ENCODE measurements at regions of chr17 and their contacts with region 1.

Region 1: DNA sequence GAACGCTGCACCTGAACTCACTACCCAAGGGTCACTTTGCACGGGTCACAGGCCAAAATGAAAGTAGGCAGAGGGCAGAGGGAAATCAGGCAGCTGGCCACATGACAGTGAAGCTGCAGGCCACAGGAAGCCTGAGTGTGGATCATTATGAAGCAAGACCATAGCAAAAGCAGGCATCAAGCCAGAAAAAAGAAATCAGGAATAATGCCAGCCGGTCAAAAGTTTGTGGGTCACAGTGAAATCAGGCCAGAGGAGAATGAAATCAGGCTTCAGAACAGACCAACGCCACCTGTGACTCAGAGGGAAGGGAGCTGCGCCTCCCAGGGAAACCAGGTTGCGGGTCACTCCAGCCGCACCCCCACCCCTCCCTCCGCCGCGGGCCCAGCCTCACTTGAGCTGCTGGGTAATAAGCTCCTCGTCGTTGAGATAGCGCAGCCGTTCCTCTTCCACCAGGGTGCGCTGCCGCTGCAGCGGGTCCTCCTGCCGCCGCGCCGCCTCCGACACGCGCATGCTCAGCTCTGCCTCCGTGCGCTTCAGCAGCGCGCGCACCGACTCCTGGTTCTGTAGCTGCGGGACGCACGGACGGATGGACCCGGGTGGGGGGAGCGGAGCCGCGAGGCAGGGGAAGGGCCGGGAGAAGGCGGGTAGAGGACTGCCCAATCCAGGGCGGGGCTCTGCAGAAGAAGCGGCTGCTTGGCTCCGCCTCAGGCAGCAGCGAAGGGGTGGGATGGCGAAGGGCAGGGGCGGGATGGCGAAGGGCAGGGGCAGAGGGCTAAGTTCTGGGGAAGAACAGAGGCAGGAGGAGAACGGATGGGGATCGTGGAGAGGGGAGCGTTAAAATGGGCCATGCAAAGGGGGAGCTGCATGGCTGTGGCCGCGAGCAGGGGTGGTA is 47.7 kb downstream of the SRCIN1 start:
- DNase-seq: peak; percentile 62
- H3K4me3 ChIP-seq: peak overlapping the region; percentile 52
- H3K27ac ChIP-seq: no peak overlapping the region
- H3K27me3 ChIP-seq: peaks cover 70% of the 10 kb centered on the region
- CTCF ChIP-seq: peak; percentile 93

Region 2: DNA sequence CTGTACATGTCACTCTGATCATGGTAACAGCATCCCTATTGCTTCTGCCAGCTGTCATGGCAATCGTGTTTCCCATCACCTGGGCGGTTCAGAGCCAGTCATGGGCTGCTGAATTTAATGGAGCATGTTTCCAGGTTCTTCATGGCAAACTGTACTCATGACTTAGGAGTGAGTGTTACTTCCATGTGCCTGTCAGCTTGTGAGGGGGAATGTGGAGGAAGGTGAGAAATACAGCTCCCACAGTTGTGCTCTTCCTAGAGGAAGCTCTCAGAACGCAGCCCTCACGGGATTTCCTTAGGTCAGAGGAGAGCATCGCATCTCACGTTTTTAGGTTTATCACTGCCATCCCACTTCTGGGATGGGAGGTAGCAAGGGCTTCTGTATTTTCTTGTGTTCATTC is 157.8 kb before region 1 on chr17:
- CTCF ChIA-PET with region 1: no interaction called
- POLR2A ChIA-PET with region 1: no interaction called
- DNase-seq: no peak
- H3K4me3 ChIP-seq: no peak overlapping the region
- H3K27ac ChIP-seq: no peak overlapping the region
- H3K27me3 ChIP-seq: no peaks in the 10 kb centered on the region
- CTCF ChIP-seq: no peak

Region 3: GRCh38 chr17:38533866-38534497 is 24.1 kb before region 1 on chr17:
- CTCF ChIA-PET with region 1: interaction called, 15 read pairs
- POLR2A ChIA-PET with region 1: no interaction called
- DNase-seq: no peak
- H3K4me3 ChIP-seq: no peak overlapping the region
- H3K27ac ChIP-seq: no peak overlapping the region
- H3K27me3 ChIP-seq: peaks cover 32% of the 10 kb centered on the region
- CTCF ChIP-seq: no peak

Region 4: DNA sequence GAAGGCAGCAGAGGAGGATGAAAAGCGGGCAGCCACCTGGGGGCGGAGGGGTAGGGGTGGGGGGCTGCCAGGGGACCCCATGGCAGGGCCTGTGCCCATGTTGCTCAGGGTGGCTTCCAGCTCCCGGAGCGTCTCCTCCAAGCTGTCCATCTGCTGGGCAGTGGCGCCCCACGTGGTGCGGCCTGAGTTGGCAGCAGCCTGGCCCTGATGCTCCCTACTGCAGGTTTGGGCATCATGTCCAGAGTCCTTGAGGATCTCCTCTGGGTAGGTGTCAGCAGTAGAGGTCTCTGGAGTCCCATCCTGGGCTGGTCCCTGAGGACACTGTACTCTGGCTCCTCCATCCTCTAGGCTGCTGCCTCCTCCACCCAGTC is 13.3 kb before region 1 on chr17:
- CTCF ChIA-PET with region 1: interaction called, 38 read pairs
- POLR2A ChIA-PET with region 1: no interaction called
- DNase-seq: no peak
- H3K4me3 ChIP-seq: no peak overlapping the region
- H3K27ac ChIP-seq: no peak overlapping the region
- H3K27me3 ChIP-seq: peaks cover 32% of the 10 kb centered on the region
- CTCF ChIP-seq: no peak

Region 5: GRCh38 chr17:38584350-38584925 is 26.4 kb after region 1 on chr17:
- CTCF ChIA-PET with region 1: interaction called, 49 read pairs
- POLR2A ChIA-PET with region 1: no interaction called
- DNase-seq: no peak
- H3K4me3 ChIP-seq: no peak overlapping the region
- H3K27ac ChIP-seq: no peak overlapping the region
- H3K27me3 ChIP-seq: peaks cover 67% of the 10 kb centered on the region
- CTCF ChIP-seq: peak; percentile 88

Region 6: GRCh38 chr17:38667099-38667786 is 109.2 kb after region 1 on chr17:
- CTCF ChIA-PET with region 1: interaction called, 77 read pairs
- POLR2A ChIA-PET with region 1: no interaction called
- DNase-seq: peak; percentile 42
- H3K4me3 ChIP-seq: no peak overlapping the region
- H3K27ac ChIP-seq: no peak overlapping the region
- H3K27me3 ChIP-seq: peaks cover 50% of the 10 kb centered on the region
- CTCF ChIP-seq: peak; percentile 100

Region 7: DNA sequence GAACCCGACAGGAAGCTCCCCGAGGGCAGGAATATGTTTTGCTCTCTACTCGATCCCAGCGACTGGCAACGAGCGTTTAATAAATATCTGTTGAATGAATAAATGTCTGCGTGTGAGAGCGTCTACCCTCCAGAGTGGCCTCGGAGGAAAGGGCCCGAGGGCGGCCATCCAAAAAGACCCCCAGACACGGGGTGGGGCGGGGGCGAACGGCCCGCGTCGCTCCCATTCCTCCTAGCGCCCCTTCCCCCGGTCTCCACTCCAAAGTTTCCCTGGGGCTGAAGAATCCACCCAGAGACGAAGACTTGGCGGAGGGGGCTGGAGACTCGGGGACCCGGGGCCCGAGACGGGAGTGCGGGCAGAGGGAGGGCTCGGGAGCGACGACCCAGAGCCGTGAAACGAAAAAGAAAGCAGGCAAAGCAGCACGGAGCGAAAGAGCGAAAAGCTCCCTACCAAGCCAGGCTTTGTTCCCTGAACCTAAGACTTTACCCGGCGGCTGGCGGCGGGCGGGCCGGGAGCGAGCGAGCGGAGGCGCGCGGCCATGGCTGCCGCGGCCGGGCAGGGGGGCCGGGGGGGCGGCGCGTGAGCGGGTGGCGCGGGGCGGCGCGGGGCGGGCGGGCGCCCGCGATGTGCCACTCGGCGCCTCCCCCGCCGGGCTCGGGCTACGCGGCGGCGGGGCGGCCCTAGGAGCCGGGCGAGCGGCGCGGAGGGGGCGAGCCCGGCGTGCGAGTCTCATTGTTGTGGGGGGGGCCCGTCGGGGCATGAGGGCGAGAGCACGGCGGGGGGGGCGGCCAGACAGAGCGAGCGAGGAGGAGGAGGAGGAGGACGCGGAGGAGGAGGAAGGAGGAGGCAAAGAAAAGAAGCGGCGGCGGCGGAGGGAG is 146.8 kb after region 1 on chr17 and contains the start of gene MLLT6:
- CTCF ChIA-PET with region 1: no interaction called
- POLR2A ChIA-PET with region 1: no interaction called
- DNase-seq: no peak
- H3K4me3 ChIP-seq: peak within 1 kb of the TSS; percentile 71
- H3K27ac ChIP-seq: peak within 1 kb of the TSS; percentile 81
- H3K27me3 ChIP-seq: no peaks in the 10 kb centered on the region
- CTCF ChIP-seq: no peak
- polyA plus RNA-seq, gene MLLT6: 16.4 and 17.3 TPM in 2 replicates